Cardiac septum (tissue), 1 donor: ENCODE measurements at regions of chr20 and their contacts with region 1.

Region 1: DNA sequence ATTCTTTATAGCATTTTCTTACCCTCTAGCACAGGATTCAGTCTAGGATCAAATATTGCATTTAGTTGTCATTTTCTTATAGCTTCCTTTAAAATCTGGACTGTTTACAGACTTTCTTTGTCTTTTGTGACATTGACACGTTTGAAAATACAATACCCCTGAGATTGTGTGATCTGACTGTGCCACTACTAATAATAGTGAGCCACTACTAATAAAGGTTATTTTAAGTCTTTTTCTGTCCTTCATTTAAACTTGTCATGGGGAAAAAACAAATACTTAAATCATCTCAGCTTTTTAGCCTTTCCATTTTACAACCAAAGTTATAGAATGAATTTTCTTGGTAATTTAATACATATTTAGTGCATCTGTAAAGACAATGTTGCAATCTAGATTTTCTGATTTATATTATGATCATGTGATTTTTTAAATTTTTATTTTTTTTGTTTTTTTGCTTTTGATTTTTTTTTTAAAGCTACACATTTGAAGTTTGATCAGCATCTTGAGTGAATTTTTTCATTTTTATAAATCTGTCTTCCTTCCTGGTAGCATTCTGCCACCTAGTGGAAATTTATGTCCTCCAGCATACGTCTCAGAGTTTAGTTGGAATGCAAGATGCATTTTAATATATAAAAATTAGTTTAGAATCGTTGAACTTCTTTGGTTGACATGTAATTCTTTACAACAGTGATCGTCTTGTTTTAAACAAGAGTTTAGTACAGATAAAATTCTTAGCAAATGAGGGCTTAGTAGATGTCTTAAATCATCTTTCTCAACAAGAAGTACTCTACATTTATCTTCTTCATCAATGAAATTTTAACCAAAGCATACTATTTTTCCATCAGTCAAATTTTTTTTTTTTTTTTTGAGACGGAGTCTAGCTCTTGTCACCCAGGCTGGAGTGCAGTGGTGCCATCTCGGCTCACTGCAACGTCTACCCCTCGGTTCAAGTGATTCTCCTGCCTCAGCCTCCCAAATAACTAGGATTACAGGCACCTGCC is 119.4 kb downstream of the NCOA3 start:
- DNase-seq: no peak

Region 2: GRCh38 chr20:47196091-47197081 is 424.7 kb before region 1 on chr20:
- intact Hi-C with region 1: loop called (anchors 5 kb)
- DNase-seq: peak; percentile 86

Region 3: GRCh38 chr20:47379433-47380150 is 241.5 kb before region 1 on chr20:
- intact Hi-C with region 1: loop called (anchors 5 kb)
- DNase-seq: no peak

Region 4: GRCh38 chr20:47501483-47502270 is 119.4 kb before region 1 on chr20 and contains the start of gene NCOA3:
- intact Hi-C with region 1: loop called (anchors 5 kb)
- DNase-seq: peak; percentile 97
- total RNA-seq, gene NCOA3: 18.6 TPM